ENCODE measurements at regions of chr14 and their contacts with region 1.

Region 1: DNA sequence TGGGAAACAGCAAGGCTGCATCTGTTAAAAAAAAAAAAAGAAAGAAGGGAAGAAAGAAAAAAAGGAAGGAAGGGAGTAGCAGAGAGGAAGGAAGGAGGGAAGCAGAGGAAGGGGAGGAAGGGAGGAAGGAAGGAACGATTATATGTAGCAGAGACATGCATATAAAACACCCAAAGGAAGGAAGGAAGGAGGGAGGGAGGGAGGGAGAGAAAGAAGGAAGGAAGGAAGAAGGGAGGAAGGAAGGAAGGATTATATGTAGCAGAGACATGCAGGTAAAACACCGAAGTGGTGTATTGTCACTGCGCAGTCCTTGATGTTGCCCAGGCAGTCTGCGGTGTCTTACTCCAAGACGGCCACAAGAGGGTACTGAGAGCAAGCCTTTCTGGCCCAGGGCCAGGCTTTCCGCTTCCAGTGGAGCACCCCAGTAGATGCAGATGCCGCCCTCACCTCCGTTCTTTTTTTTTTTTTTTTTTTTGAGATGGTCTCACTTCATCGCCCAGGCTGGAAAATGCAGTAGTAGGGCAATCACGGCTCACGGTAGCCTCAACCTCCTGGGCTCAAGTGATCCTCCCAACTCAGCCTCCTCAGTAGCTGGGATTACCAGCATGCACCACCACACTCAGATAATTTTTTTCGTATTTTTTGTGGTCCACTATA is 5.8 kb upstream of the LBHD2 start:
- DNase-seq: peak; percentile 59
- ATAC-seq: peak; percentile 49; the same call in 1 of the 2 replicates
- H3K4me3 ChIP-seq: no peak overlapping the region
- H3K27ac ChIP-seq: no peak overlapping the region
- H3K4me1 ChIP-seq: peaks cover 11% of the 10 kb centered on the region
- H3K27me3 ChIP-seq: no peaks in the 10 kb centered on the region
- CTCF ChIP-seq: peak; percentile 78

Region 2: GRCh38 chr14:103104654-103105452 is 26.6 kb after region 1 on chr14:
- CTCF ChIA-PET with region 1: interaction called, 9 read pairs
- POLR2A ChIA-PET with region 1: interaction called, 12 read pairs
- in situ Hi-C with region 1: no loop called
- intact Hi-C with region 1: no loop called
- DNase-seq: no peak
- ATAC-seq: peak; percentile 65
- H3K4me3 ChIP-seq: peak overlapping the region in 1 of 2 experiments; percentile 24; a peak in 1 of 4 replicates
- H3K27ac ChIP-seq: peak overlapping the region; percentile 63; the same call in 1 of the 2 replicates
- H3K4me1 ChIP-seq: peaks cover 16% of the 10 kb centered on the region
- H3K27me3 ChIP-seq: no peaks in the 10 kb centered on the region
- CTCF ChIP-seq: peak; percentile 93

Region 3: DNA sequence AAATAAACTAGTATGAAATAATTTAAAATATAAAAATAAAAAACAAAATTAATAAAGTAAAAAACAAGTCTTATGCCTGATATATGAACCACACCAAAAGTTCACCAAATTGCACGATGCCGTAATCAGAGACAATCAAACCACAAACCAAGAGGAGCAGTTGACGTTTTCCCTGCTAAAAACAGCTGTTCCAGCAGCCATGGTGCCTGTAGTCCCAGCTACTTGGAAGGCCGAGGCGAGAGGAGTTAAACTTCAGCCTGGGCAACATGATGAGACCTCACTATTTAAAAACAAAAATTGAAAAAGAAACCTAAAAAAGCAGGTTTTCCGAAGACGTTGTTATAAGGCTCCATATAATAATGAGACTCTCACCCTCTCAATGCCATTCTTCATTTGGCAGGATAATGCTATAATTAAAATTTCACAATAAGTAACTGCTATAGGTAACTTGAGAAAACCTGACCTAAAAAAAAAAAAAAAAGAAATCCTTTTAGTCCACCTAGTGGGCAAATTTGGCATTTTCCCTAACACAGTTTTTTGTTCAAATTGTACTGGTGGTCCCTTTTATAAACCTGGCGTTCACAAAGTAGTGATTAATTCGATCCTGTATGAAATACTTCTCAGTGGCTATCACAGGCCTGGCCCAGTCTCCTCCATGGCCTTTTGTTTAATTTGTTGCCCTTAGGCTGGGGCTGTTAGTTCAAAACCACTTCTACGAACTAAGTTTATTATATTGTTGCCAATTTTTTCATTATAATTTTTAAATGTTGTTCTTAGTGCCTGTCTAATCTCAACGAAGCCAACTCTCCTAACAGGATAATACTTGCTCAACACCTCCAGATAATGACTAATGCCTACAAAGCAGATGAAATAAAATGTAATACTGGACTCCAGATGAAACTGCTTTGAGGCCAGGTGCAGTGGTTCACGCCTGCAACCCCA is 107.1 kb after region 1 on chr14:
- CTCF ChIA-PET with region 1: no interaction called
- POLR2A ChIA-PET with region 1: no interaction called
- in situ Hi-C with region 1: no loop called
- intact Hi-C with region 1: loop called (anchors 10 kb)
- DNase-seq: peak; percentile 32
- ATAC-seq: no peak
- H3K4me3 ChIP-seq: no peak overlapping the region
- H3K27ac ChIP-seq: no peak overlapping the region; the same call in 1 of the 2 replicates
- H3K4me1 ChIP-seq: peaks cover 10% of the 10 kb centered on the region
- H3K27me3 ChIP-seq: no peaks in the 10 kb centered on the region
- CTCF ChIP-seq: peak; percentile 65; the same call in 1 of the 2 replicates

Region 4: DNA sequence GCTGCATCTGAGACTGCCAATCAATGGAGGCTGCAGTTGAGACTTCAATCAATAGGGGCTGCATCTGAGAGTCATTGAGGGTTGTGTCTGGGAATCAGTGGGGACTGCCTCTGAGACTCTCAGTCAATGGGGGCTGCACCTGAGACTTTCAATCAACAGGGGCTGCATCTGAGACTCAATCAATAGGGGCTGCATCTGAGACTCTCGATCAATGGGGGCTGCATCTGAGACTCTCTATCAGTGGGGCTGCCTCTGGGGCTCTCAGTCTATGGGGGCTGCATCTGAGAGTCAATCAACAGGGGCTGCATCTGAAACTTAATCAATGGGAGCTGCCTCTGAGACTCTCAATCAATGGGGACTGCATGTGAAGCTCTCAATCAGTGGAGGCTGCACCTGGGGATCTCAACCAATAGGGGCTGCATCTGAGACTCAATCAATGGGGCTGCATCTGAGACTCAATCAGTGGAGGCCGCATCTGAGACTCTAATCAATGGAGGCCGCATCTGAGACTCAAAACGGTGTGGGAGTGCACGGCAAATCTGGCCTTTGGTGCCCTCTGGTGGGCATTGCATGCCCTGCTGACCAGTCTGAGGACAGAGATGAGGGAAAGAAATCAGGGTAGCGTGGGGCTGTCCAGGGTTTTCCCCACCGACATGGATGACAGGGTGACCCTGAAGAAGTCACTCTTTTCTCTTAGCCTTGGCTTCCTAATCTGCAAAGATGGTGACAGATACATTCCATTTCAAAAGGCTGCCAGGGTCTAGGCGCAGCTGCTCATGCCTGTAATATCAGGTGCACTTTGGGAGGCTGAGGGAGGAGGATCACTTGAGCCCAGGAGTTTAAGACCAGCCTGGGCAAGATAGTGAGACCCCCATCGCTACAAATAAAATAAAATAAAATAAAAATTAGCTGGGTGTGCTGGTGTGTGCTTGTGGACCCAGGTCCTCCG is 214.5 kb after region 1 on chr14:
- CTCF ChIA-PET with region 1: no interaction called
- POLR2A ChIA-PET with region 1: no interaction called
- in situ Hi-C with region 1: no loop called
- intact Hi-C with region 1: loop called (anchors 2 kb)
- DNase-seq: peak; percentile 55
- ATAC-seq: peak; percentile 95
- H3K4me3 ChIP-seq: no peak overlapping the region
- H3K27ac ChIP-seq: no peak overlapping the region
- H3K4me1 ChIP-seq: no peaks in the 10 kb centered on the region
- H3K27me3 ChIP-seq: no peaks in the 10 kb centered on the region
- CTCF ChIP-seq: peak; percentile 85

Measured in Panc1 (cell line).